PC-9 (cell line): ENCODE measurements at regions of chr2 and their contacts with region 1.

Region 1: DNA sequence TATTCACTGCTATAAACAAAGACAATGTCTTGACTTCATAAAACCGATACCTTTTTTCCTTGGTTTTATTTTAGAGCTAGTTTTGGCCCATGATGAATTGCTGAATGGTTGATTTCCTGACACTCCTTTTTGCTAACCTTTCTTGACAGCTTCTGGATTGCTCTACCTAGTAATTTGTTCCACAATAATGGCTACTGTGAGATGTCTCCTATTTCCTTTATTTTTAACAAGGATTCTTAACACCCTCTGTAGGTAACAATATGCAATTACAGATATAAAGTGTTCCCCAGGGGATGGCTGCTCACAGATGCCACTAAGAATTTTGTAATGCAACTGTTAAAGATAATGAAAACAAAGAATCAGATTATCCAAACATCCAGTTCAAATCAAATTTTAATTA is 100.8 kb upstream of the ATP5MC3 start:
- DNase-seq: no peak
- H3K4me3 ChIP-seq: no peak overlapping the region
- H3K27ac ChIP-seq: no peak overlapping the region
- H3K4me1 ChIP-seq: no peaks in the 10 kb centered on the region
- H3K27me3 ChIP-seq: peaks cover 27% of the 10 kb centered on the region; the same call in 1 of the 2 replicates
- CTCF ChIP-seq: peak; percentile 81

Region 2: GRCh38 chr2:174644401-174644800 is 637.9 kb before region 1 on chr2:
- CTCF ChIA-PET with region 1: no interaction called
- POLR2A ChIA-PET with region 1: no interaction called
- intact Hi-C with region 1: no loop called
- DNase-seq: no peak
- H3K4me3 ChIP-seq: no peak overlapping the region
- H3K27ac ChIP-seq: no peak overlapping the region
- H3K4me1 ChIP-seq: no peaks in the 10 kb centered on the region
- H3K27me3 ChIP-seq: no peaks in the 10 kb centered on the region
- CTCF ChIP-seq: no peak

Region 3: GRCh38 chr2:175030380-175031271 is 251.7 kb before region 1 on chr2:
- CTCF ChIA-PET with region 1: no interaction called
- POLR2A ChIA-PET with region 1: no interaction called
- intact Hi-C with region 1: loop called (anchors 5 kb)
- DNase-seq: peak; percentile 45 to 46
- H3K4me3 ChIP-seq: no peak overlapping the region
- H3K27ac ChIP-seq: no peak overlapping the region
- H3K4me1 ChIP-seq: no peaks in the 10 kb centered on the region
- H3K27me3 ChIP-seq: no peaks in the 10 kb centered on the region
- CTCF ChIP-seq: peak; percentile 68

Region 4: DNA sequence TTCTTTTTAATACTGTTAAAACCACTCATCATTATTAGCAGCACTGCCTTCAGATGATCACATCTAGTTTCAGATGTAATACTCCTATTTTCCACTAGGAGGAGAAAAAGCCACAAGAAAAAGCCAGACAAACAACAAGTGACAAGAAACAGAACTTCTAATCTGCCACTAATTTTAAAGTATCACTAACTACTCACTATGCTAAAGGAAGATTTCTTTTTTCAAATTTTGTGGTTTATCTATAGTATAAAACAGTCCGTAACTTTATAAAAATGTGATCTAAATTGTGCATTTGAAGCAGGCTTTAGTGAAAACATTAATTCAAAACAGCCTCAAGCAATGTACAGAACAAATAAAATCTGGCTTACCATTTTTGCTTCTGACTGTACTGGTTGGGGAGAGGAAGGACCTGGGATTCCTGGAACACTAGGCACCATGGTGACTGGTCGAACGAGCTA is 171.1 kb before region 1 on chr2:
- CTCF ChIA-PET with region 1: no interaction called
- POLR2A ChIA-PET with region 1: no interaction called
- intact Hi-C with region 1: loop called (anchors 5 kb)
- DNase-seq: peak in 1 of 2 experiments; percentile 59
- H3K4me3 ChIP-seq: no peak overlapping the region
- H3K27ac ChIP-seq: no peak overlapping the region
- H3K4me1 ChIP-seq: no peaks in the 10 kb centered on the region
- H3K27me3 ChIP-seq: no peaks in the 10 kb centered on the region
- CTCF ChIP-seq: peak; percentile 98

Region 5: DNA sequence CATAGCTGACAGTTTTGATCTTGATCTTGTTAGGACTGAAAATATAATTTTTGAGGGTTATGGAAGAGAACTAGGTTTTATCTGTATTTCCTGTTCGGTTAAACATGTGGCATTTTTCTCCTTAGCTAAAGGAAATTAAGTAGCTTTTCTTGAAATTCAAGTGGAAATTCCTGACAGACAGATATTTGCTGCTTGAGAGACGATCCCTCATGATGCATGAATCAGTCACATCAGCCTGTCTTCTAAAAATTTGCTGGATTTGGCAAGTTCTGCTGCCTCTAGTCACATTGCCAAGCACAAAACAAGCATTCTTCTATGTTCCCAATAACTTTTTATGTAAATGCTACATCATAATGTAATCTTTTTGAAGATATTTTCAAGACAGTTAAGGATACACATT is 101.0 kb after region 1 on chr2:
- CTCF ChIA-PET with region 1: no interaction called
- POLR2A ChIA-PET with region 1: no interaction called
- intact Hi-C with region 1: no loop called
- DNase-seq: no peak
- H3K4me3 ChIP-seq: no peak overlapping the region
- H3K27ac ChIP-seq: no peak overlapping the region
- H3K4me1 ChIP-seq: no peaks in the 10 kb centered on the region
- H3K27me3 ChIP-seq: no peaks in the 10 kb centered on the region
- CTCF ChIP-seq: no peak

Region 6: DNA sequence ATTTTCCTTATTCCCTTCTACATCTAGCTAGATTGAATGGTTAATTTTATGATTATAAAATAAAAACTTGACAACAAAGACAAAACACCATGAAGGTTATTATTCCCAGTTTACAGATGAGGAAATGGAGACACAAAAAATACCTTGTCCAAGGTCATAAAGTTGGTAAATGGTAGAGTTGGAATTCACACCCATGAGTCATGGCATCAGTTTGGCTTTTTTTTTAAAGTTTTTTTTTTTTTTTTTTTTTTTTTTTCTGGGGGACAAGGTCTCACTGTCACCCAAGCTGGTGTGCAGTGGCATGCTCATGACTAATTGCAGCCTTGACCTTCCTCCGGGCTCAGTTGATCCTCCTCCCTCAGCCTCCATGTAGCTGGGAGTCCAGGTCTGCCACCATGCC is 1056.9 kb after region 1 on chr2:
- CTCF ChIA-PET with region 1: no interaction called
- POLR2A ChIA-PET with region 1: interaction called, 13 read pairs
- intact Hi-C with region 1: no loop called
- DNase-seq: no peak
- H3K4me3 ChIP-seq: no peak overlapping the region
- H3K27ac ChIP-seq: no peak overlapping the region
- H3K4me1 ChIP-seq: no peaks in the 10 kb centered on the region
- H3K27me3 ChIP-seq: no peaks in the 10 kb centered on the region
- CTCF ChIP-seq: no peak